Left cardiac atrium (tissue), 4 donors: ENCODE measurements at regions of chr7 and their contacts with region 1.

Region 1: DNA sequence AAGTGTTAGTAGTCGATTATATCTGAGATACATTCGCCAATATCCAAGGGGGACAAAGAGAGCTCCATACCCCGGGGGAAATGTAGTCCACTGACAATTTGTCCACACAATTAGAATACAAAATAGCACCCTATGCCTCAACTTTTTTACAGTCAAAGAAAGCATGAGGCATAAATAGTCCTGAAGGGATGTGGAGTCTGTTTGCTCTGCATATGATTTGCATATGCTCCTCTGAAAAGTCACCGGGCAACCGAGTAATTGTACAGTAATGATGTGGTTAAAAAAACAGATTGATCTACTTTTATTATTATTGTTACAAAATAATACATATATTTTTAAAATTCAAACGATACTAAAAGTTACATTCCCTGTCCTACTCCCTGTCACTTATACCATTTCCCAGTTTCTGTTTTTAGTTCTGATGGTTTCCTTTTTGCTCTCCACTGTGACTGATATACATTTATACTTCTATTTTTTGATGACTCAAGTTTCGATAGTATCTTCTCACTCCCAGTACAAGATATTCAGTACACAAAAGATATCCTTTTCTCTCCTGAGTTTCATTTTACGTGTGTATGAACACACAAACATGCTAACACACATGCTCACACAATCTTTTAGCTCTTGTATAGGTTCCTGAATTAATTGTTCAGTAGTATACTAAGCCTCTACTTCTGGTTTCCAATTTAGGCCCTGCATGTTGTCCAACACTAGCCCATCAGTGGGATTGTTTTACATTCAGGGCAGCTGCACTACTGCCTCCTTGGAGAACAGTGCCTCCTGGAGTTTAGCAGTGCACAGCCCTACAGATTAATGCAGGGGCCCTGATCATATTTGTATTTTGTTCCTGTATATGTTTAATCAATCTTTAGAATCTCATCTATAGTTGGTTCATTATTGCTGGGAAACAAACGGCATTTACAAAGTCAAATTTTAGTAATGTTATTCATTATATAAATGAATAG is 130.9 kb downstream of the TES start:
- DNase-seq: no peak
- ATAC-seq: no peak

Region 2: DNA sequence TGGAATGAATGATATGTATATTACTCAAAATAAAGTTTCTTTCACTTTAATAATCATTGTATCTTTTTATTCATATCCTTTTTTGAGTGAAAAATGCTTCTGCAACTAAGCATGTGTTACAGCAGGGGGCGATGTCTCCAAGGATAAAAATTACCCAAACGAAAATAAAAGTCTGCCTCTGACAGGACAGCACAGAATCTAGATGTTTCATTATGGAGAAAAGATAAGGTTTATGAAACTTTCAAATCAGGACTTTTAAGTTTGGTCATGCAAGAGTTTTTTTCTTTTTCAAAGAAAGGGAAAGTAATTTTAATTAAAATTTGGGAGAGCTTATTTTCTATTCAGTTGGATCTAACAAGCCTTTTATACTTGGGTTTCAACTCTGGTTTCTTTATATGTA is 82.5 kb before region 1 on chr7:
- intact Hi-C with region 1: loop called in 1 of 2 experiments (anchors 10 kb)
- DNase-seq: no peak
- ATAC-seq: peak; percentile 66 to 68

Region 3: DNA sequence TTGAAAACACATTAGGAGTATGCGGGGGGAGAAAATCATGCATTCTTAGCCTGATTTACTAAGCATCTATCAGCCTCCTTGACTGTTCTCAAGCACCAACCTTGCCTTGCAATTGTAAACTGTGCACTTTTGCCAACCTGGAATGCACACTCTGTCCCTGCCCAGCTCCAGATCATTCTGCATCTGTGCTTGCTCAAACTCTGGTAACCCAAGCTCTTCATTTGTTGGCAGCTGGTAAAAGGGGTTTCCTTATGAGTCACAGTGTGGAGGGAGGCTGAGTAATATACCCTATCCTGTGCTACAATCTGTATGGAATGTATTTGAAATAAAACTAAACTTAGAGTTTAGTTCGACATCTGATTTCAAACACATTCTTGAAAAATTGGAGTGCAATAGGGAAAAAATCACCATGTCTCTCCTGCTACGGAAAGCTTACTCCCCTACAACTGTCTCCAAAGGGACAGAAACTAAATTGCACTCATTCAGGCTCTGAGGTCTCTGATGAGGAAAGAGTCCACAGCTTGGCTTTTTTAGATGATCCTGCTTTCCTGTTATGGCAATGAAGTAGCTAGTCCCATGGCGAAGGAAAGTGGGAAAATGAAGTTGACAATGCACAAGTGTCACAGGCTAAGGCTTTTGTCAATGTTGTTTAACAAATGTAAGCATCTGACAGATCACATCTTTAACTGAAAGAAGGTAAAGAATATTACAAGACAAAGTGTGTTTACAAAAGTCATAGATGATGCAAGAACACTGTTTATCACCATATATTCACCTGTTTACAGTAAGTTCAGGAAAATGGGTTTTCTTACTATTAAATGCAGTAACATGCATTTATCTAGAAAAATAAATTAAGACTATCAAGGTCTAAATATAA is 69.0 kb before region 1 on chr7:
- intact Hi-C with region 1: loop called (anchors 10 kb)
- DNase-seq: peak; percentile 33
- ATAC-seq: peak; percentile 89 to 99